ENCODE measurements at regions of chr10 and their contacts with region 1.

Region 1: DNA sequence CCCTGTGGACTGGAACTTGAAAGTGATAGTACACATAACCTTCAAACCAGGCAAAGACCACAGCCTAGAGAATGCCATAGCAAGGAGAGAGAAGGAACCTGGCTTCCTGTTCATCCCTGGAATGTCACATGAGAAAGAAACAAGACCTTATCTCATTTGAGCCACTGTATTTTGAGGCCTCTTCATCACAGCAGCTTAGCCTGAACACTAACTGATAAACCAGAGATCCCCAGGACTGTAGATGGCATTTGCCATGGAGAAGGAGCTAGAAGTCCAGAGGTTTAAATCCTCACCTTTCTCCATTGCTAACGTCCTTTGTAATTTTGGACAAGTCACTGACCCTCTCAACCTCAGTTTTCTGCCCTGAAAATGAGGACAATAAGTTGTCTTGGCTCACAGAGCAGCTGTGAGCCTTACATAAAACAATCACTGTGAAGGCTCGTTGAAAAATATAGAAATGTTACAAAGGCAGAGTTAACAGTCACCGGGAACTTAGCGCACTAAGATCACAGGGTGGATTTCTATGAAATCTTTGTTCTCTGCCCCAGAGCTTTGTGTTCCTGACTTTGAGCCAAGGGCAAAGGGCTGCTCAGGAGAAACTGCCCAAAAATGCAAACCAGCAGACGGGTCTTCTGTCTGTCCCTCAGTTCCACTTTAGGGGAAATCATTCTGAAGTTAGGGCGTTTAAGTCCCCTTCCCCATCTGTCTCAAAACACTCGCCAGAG is 197.0 kb downstream of the USP6NL start:
- DNase-seq: no peak
- ATAC-seq: no peak
- H3K4me3 ChIP-seq: no peak overlapping the region
- H3K4me3 Mint-ChIP-seq: no peak overlapping the region
- H3K27ac ChIP-seq: no peak overlapping the region
- H3K27ac Mint-ChIP-seq: no peak overlapping the region
- H3K4me1 ChIP-seq: no peaks in the 10 kb centered on the region
- H3K4me1 Mint-ChIP-seq: peaks cover 9 to 14% (median 13%) of the 10 kb centered on the region in 3 donors
- H3K27me3 ChIP-seq: no peaks in the 10 kb centered on the region
- H3K27me3 Mint-ChIP-seq: no peaks in the 10 kb centered on the region

Region 2: GRCh38 chr10:11298116-11298515 is 116.4 kb before region 1 on chr10:
- CTCF ChIA-PET with region 1: interaction called in 1 of 2 experiments, 10 read pairs
- POLR2A ChIA-PET with region 1: no interaction called
- DNase-seq: no peak
- ATAC-seq: peak in 1 of 4 experiments; percentile 19
- H3K4me3 ChIP-seq: no peak overlapping the region
- H3K4me3 Mint-ChIP-seq: no peak overlapping the region
- H3K27ac ChIP-seq: no peak overlapping the region
- H3K27ac Mint-ChIP-seq: peak overlapping the region; percentile 28 to 49
- H3K4me1 ChIP-seq: peaks cover 0 to 6% of the 10 kb centered on the region in 2 experiments
- H3K4me1 Mint-ChIP-seq: peaks cover 27 to 47% (median 28%) of the 10 kb centered on the region in 3 donors
- H3K27me3 ChIP-seq: no peaks in the 10 kb centered on the region
- H3K27me3 Mint-ChIP-seq: no peaks in the 10 kb centered on the region

Measured in T-cell (primary cell).